Heart right ventricle (tissue), 16 donors: ENCODE measurements at regions of chr15 and their contacts with region 1.

Region 1: DNA sequence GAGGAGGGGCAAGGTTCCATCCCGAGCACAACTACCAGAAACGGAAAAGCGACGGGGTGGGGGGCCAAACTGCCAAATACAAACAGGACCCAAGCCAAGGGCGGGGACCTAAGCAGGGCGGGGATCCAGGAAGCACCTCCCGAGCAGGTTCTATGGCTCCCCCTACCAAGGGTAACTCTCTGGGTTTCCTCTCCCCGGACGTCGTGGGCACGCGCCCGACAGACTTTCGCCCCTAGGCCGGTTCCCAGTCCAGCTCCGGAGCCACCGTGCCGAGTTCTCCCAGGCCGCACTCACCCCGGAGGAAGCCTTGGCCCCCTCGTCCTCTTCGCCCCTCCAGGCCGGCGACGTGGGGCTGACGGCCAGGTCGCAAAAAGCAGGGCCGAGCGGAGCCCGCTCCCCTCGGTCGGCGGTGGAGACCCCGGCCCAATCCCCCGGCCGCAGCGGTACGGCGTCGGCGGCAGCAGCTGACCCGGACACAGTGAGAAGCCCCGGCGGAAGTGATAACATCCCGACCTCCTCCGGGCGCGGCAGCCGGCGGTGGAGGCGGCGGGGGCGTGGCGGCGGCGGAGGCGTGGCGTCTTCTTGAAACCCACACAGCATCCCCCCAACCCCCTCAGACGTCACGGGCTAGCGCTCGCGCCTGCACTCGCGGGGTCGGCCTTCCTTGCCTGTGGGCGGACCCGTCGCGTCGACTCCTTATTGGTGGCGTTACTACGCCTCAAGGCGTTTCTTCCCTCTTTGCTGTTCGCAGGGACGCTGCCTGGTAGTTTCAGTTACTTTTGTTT is at the start of gene BNIP2:
- DNase-seq: peak; percentile 99 to 100
- ATAC-seq: peak; percentile 97 to 98 (median 98)
- H3K4me3 ChIP-seq: peak within 1 kb of the TSS; percentile 72 to 99 (median 90)
- H3K27ac ChIP-seq: peak within 1 kb of the TSS; percentile 95 to 99 (median 98)
- H3K4me1 ChIP-seq: peaks cover 0 to 56% (median 38%) of the 10 kb centered on the region in 9 donors
- H3K27me3 ChIP-seq: no peaks in the 10 kb centered on the region
- CTCF ChIP-seq: peak in 3 of 9 donors; percentile 10 to 18 (median 15)
- total RNA-seq, gene BNIP2: 65.2 to 96.6 (median 80.2) TPM

Region 2: GRCh38 chr15:59420986-59421618 is 267.9 kb before region 1 on chr15:
- intact Hi-C with region 1: no loop called
- DNase-seq: no peak
- ATAC-seq: no peak
- H3K4me3 ChIP-seq: no peak overlapping the region
- H3K27ac ChIP-seq: no peak overlapping the region
- H3K4me1 ChIP-seq: no peaks in the 10 kb centered on the region
- H3K27me3 ChIP-seq: peaks cover 0 to 16% (median 5%) of the 10 kb centered on the region in 7 donors
- CTCF ChIP-seq: no peak

Region 3: DNA sequence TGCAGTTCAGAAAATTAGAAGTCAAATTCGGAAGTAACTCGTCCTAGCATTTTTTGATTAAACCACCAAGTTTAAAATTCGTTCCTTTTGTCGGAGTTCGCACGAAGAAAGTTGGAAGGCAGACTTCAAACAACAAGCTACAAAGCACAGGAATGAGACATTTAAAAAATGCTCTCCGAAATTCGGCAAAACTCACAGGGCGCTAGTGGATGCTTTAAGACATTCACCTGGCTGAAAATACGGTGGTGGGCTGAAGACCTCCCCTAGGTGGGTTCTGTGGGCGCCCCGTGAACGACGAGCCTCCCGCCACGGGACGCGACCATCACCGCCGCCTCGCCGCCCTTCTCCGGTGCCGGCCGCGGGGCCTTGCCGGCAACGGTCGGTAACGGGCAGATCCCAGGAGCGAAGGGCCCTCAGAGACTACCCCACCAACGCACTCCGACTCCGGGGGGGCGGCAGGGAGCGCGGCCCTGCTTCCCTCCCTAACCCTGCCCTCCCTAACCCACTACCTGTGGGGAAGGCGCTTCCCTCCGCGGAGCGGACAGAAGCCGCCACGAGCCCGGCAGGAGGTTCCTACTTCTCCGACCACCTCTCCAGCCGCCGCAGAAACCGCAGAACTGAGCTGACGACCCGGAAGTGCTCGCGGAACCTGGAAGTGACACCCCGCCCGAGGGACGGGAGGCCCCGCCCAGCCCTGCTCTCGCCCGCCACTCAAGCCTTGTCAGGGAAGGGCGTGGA is 32.0 kb before region 1 on chr15 and contains the start of gene GTF2A2:
- intact Hi-C with region 1: loop called in 1 of 10 experiments (anchors 2 kb)
- DNase-seq: peak; percentile 95 to 96
- ATAC-seq: peak; percentile 100
- H3K4me3 ChIP-seq: peak within 1 kb of the TSS; percentile 73 to 99 (median 92)
- H3K27ac ChIP-seq: peak within 1 kb of the TSS in 9 of 10 donors; percentile 59 to 90 (median 85)
- H3K4me1 ChIP-seq: peaks cover 0 to 32% (median 23%) of the 10 kb centered on the region in 9 donors
- H3K27me3 ChIP-seq: no peaks in the 10 kb centered on the region
- CTCF ChIP-seq: no peak
- total RNA-seq, gene GTF2A2: 121 to 150 (median 129) TPM

Region 4: DNA sequence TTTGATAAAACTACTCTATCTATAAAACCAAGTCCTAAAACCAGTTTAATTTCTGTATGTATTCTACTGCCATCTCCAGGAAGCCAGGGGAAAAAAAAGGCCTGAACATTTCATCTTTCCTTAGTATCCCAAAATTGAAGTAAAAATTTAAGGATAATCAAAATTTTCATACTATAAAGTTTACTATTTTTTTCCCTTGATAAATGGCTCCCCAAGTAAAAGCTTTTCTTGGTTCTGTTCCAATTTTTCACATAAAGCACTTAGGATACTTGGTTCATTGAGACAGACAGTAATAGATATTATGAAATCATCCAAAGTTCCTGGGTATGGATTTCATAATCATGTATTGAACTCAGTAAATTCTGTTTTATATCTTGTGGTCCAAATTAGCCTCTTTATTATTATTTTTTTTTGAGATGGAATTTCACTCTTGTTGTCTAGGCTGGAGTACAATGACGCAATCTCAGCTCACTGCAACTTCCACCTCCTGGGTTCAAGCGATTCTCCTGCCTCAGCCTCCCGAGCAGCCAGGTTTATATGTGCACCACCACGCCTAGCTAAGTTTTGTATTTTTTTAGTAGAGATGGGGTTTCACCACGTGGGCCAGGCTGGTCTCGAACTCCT is 755.4 kb after region 1 on chr15:
- intact Hi-C with region 1: loop called in 1 of 10 experiments (anchors 10 kb)
- DNase-seq: no peak
- ATAC-seq: no peak
- H3K4me3 ChIP-seq: no peak overlapping the region
- H3K27ac ChIP-seq: no peak overlapping the region
- H3K4me1 ChIP-seq: peaks cover 0 to 6% (median 0%) of the 10 kb centered on the region in 9 donors
- H3K27me3 ChIP-seq: no peaks in the 10 kb centered on the region
- CTCF ChIP-seq: peak; percentile 23 to 76 (median 68)